Dorsolateral prefrontal cortex (tissue), 120 donors: ENCODE measurements at regions of chr11 and their contacts with region 1.

Region 1: DNA sequence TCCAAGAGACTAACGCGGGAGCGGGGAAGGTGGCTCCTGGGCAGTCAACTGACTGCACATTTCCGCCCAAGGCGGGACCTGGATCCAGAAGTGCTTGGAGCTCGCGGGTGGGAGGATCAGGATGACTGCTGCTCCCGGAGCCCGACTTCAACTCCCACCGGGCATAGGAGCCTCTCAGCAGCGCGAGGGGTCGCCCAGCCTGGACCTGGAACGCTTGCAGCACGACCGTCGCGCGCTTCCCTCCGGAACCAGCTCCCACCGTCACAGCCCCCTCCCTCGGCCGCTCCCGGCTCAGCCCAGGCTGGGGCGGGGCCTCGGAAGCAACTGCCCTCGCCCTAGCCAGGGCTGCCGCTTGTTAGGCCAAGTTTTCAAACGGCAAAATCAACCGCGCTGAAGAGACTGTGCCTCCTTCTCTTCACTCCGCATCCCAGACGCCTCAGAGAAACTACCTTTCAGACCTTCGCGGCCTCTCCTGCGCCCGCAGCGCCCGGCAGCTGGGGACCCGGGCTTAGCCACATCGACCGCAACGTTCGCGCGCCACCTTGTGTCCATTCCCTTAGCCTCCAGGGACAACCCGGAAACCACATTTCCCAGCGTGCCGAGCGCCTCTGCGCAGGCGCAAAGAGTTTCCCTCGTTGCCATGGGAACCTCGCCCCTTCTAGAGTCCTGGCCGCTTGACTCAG is 14.0 kb downstream of the SSH3 start:
- DNase-seq: peak; percentile 92 to 98 (median 96)
- H3K4me3 ChIP-seq: peak overlapping the region; percentile 60 to 99 (median 86)
- H3K27ac ChIP-seq: peak overlapping the region; percentile 69 to 99 (median 96)
- H3K27me3 ChIP-seq: no peaks in the 10 kb centered on the region
- CTCF ChIP-seq: peak; percentile 92 to 99 (median 97)

Region 2: DNA sequence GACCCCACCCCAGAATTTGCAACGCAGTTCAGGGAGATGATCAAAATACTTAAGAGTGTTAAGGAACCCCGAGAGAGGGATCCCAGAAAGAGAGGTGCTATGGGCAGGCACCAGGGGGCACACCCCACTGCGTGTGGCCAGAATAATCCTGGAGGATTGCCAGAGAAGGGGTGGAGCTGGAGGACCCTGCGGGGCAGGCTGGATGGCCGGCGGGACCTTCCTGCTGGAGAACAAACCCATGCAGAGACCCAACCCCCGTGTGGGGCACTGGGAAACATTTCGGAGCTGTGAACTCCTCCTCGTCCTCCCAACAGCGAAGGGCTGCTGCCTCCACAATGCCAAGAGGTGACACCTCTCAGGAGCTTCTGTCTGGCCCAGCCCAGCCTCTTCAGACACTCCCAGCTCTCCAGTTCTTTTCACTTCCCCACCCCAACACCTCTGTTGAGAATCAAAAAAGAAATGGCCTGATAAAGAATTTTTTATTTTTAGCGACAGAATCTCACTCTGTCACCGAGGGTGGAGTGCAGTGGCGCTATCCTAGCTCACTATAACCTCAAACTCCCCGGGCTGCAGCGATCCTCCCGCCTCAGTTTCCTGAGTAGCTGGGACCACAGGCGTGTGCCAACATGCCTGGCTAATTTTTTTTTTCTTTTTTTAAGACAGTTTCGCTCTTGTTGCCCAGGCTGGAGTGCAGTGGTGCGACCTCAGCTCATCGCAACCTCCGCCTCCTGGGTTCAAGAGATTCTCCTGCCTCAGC is 235.1 kb before region 1 on chr11:
- intact Hi-C with region 1: loop called (anchors 1 to 10 kb)
- DNase-seq: no peak
- H3K4me3 ChIP-seq: peak overlapping the region in 19 of 59 donors; percentile 1 to 42 (median 12)
- H3K27ac ChIP-seq: no peak overlapping the region
- H3K27me3 ChIP-seq: peaks cover 0 to 2% (median 0%) of the 10 kb centered on the region in 45 donors
- CTCF ChIP-seq: no peak

Region 3: GRCh38 chr11:67118801-67119584 is 198.4 kb before region 1 on chr11 and contains the start of gene KDM2A:
- intact Hi-C with region 1: loop called in 1 of 2 experiments (anchors 2 kb)
- DNase-seq: peak; percentile 94 to 99 (median 98)
- H3K4me3 ChIP-seq: peak within 1 kb of the TSS; percentile 68 to 97 (median 90)
- H3K27ac ChIP-seq: peak within 1 kb of the TSS; percentile 90 to 100 (median 98)
- H3K27me3 ChIP-seq: no peaks in the 10 kb centered on the region
- CTCF ChIP-seq: peak in 47 of 56 donors; percentile 9 to 74 (median 45)
- total RNA-seq, gene KDM2A: 56.5 to 97.4 (median 71.9) TPM

Region 4: DNA sequence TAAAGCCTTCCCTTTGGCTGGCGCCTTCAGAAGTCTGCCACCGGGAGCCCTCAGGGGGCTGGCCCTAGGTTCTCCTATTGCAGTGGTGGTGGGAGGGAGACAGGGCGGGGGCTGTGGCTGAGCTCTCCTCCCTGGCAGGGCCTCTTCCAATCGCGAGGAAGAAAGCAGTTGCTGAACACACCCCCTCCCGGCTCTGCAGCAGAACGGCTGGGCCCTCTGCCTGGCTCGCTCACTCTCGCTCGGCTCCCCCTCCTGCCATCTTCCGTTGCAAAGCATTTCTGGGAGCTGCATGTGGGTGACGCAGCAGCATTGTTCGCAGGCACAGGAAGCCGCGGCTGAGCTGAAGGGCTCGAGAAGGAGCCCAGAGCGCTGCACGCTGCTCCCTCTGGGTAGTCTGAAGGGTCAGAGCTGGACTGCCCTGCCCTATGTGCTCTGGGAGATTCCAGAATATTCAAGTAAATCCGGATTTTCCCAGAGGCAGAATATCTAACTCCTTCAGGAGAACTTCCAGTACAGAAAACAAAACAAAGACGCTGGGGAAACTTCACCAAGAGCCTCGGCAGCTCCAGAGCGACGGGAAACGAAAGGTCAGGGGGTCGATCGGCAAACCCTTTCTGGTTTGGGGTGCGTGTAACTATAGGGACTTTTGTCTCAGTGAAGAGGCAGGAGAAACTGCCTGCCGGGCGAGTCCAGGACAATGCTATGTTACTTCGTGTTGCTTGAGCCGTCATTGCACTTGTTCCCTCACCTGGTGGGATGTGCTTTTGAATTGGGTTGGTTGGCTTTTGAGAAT is 77.4 kb before region 1 on chr11:
- intact Hi-C with region 1: loop called in 1 of 2 experiments (anchors 1 kb)
- DNase-seq: peak; percentile 82 to 99 (median 97)
- H3K4me3 ChIP-seq: peak overlapping the region; percentile 53 to 99 (median 75)
- H3K27ac ChIP-seq: peak overlapping the region; percentile 29 to 99 (median 91)
- H3K27me3 ChIP-seq: no peaks in the 10 kb centered on the region
- CTCF ChIP-seq: peak in 51 of 56 donors; percentile 1 to 64 (median 42)

Region 5: GRCh38 chr11:67288452-67289225 is 28.7 kb before region 1 on chr11:
- intact Hi-C with region 1: loop called in 1 of 2 experiments (anchors 2 kb)
- DNase-seq: peak; percentile 58 to 88 (median 76)
- H3K4me3 ChIP-seq: peak overlapping the region; percentile 63 to 98 (median 87)
- H3K27ac ChIP-seq: peak overlapping the region; percentile 27 to 99 (median 95)
- H3K27me3 ChIP-seq: no peaks in the 10 kb centered on the region
- CTCF ChIP-seq: peak in 34 of 56 donors; percentile 4 to 55 (median 30)

Region 6: DNA sequence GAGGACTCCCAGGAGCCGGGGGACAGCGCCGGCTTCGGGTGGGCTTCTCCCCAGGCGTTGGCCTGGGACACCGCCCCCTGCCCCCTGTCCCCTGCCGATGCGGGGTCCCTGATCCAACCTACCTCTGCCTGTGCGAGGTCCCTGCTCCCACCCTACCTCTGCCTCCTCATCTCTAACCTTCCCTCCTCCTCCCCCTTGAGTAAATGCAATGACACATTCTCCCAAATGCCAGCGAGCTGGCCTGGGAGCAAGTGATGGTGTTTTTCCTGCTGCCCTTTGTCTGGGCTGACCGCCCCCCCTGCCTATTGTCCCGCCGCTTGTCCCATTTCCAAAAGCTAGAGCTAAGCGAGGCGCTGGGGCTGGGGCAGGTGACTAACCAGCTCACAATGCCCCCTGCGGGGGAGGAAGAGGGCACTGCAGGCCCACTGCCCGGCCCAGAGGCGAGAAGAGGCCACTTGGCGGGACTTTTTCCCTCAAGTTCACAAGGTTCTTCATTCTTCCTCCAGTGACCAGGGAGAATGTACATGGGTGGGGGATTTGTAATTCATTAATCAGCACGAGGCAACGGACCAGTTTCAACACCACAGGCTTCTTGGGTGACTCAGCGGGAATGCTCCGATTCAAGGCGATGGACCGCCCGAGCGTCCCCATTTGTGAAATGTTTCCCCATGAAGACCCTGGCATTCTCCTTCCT is 56.7 kb after region 1 on chr11:
- intact Hi-C with region 1: no loop called
- DNase-seq: peak in 1 of 10 donors; percentile 64
- H3K4me3 ChIP-seq: peak overlapping the region in 41 of 59 donors; percentile 5 to 78 (median 62)
- H3K27ac ChIP-seq: peak overlapping the region in 1 of 59 donors; percentile 45
- H3K27me3 ChIP-seq: peaks cover 0 to 14% (median 0%) of the 10 kb centered on the region in 45 donors
- CTCF ChIP-seq: peak in 36 of 56 donors; percentile 8 to 45 (median 25)